Psoas muscle (tissue), 8 donors: ENCODE measurements at regions of chr1 and their contacts with region 1.

Region 1: GRCh38 chr1:24635195-24635843 is 7.8 kb upstream of the SRRM1 start:
- DNase-seq: no peak
- ATAC-seq: peak; percentile 42 to 68 (median 54)
- H3K4me3 ChIP-seq: no peak overlapping the region
- H3K27ac ChIP-seq: no peak overlapping the region
- H3K4me1 ChIP-seq: no peaks in the 10 kb centered on the region
- H3K27me3 ChIP-seq: peaks cover 0 to 5% (median 0%) of the 10 kb centered on the region in 3 donors
- CTCF ChIP-seq: peak; percentile 50

Region 2: GRCh38 chr1:24201941-24202440 is 433.3 kb before region 1 on chr1:
- intact Hi-C with region 1: loop called (anchors 2 to 5 kb)
- DNase-seq: peak; percentile 72 to 76
- ATAC-seq: peak; percentile 80 to 87 (median 85)
- H3K4me3 ChIP-seq: no peak overlapping the region
- H3K27ac ChIP-seq: no peak overlapping the region
- H3K4me1 ChIP-seq: no peaks in the 10 kb centered on the region
- H3K27me3 ChIP-seq: peaks cover 0 to 6% (median 0%) of the 10 kb centered on the region in 3 donors
- CTCF ChIP-seq: peak; percentile 81

Region 3: DNA sequence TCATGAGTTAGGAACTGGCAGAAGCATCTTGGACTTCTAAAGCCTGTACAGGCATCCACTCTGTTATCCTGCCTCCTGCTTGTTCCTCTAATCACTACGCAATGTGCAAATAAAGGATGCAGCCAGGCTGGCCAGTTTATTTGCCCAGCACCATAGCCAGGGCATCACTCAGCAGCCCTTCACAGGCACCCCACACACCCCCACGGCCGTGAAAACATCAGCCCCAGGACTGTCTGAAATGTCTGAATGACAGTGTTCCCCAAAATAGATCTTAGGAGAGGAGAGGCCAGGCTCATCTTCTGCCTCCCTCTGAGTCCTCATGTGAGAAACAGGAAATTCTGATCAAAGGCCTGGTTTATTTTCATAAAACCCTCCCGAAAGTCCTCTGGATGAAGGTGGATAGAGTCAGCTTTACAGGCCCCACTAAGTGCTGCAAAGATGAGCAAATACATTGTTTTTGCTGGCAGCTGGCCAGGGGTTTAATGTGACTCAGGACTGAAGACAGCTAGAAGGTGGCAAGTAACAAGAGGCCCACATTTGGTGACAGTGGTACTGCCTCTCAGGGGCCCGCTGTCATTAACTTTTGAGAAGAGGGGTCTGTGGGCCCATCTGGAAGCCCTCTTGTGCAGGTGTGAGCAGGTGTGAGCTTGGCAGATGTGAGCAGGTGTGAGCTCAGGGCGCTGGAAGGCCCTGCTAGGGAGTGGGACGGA is 283.2 kb before region 1 on chr1:
- intact Hi-C with region 1: no loop called
- DNase-seq: no peak
- ATAC-seq: peak in 2 of 4 donors; percentile 40 to 43
- H3K4me3 ChIP-seq: no peak overlapping the region
- H3K27ac ChIP-seq: no peak overlapping the region
- H3K4me1 ChIP-seq: no peaks in the 10 kb centered on the region
- H3K27me3 ChIP-seq: no peaks in the 10 kb centered on the region
- CTCF ChIP-seq: no peak

Region 4: GRCh38 chr1:24415334-24415909 is 219.9 kb before region 1 on chr1 and contains the start of gene NIPAL3:
- intact Hi-C with region 1: loop called (anchors 10 kb)
- DNase-seq: peak; percentile 98
- ATAC-seq: peak; percentile 95 to 97 (median 96)
- H3K4me3 ChIP-seq: peak within 1 kb of the TSS; percentile 75
- H3K27ac ChIP-seq: no peak within 1 kb of the TSS
- H3K4me1 ChIP-seq: no peaks in the 10 kb centered on the region
- H3K27me3 ChIP-seq: peaks cover 0 to 4% (median 0%) of the 10 kb centered on the region in 3 donors
- CTCF ChIP-seq: peak; percentile 64
- total RNA-seq, gene NIPAL3: 3.5 to 10.9 (median 5.2) TPM

Region 5: GRCh38 chr1:24421502-24421901 is 213.8 kb before region 1 on chr1:
- intact Hi-C with region 1: loop called (anchors 10 kb)
- DNase-seq: no peak
- ATAC-seq: no peak
- H3K4me3 ChIP-seq: no peak overlapping the region
- H3K27ac ChIP-seq: no peak overlapping the region
- H3K4me1 ChIP-seq: no peaks in the 10 kb centered on the region
- H3K27me3 ChIP-seq: no peaks in the 10 kb centered on the region
- CTCF ChIP-seq: no peak

Region 6: GRCh38 chr1:24551960-24552571 is 83.3 kb before region 1 on chr1:
- intact Hi-C with region 1: loop called in 1 of 2 experiments (anchors 5 kb)
- DNase-seq: no peak
- ATAC-seq: no peak
- H3K4me3 ChIP-seq: no peak overlapping the region
- H3K27ac ChIP-seq: no peak overlapping the region
- H3K4me1 ChIP-seq: peaks cover 3% of the 10 kb centered on the region
- H3K27me3 ChIP-seq: peaks cover 0 to 37% (median 8%) of the 10 kb centered on the region in 3 donors
- CTCF ChIP-seq: no peak